Activated CD4-positive, alpha-beta memory T cell treated with anti-CD3 and anti-CD28 coated beads, Interleukin-2, amount 10 ng/mL, durations not matched to agents 7 days and 5 days (primary cell): ENCODE measurements at regions of chr3 and their contacts with region 1.

Region 1: GRCh38 chr3:151067158-151067557 is 18.3 kb upstream of the MED12L start:
- DNase-seq: no peak
- H3K4me3 Mint-ChIP-seq: no peak overlapping the region
- H3K27ac Mint-ChIP-seq: no peak overlapping the region
- H3K4me1 Mint-ChIP-seq: no peaks in the 10 kb centered on the region
- H3K27me3 Mint-ChIP-seq: peaks cover 14% of the 10 kb centered on the region

Region 2: GRCh38 chr3:151051533-151051932 is 15.6 kb before region 1 on chr3:
- CTCF ChIA-PET with region 1: no interaction called
- POLR2A ChIA-PET with region 1: no interaction called
- DNase-seq: no peak
- H3K4me3 Mint-ChIP-seq: no peak overlapping the region
- H3K27ac Mint-ChIP-seq: no peak overlapping the region
- H3K4me1 Mint-ChIP-seq: no peaks in the 10 kb centered on the region
- H3K27me3 Mint-ChIP-seq: peaks cover 28% of the 10 kb centered on the region

Region 3: DNA sequence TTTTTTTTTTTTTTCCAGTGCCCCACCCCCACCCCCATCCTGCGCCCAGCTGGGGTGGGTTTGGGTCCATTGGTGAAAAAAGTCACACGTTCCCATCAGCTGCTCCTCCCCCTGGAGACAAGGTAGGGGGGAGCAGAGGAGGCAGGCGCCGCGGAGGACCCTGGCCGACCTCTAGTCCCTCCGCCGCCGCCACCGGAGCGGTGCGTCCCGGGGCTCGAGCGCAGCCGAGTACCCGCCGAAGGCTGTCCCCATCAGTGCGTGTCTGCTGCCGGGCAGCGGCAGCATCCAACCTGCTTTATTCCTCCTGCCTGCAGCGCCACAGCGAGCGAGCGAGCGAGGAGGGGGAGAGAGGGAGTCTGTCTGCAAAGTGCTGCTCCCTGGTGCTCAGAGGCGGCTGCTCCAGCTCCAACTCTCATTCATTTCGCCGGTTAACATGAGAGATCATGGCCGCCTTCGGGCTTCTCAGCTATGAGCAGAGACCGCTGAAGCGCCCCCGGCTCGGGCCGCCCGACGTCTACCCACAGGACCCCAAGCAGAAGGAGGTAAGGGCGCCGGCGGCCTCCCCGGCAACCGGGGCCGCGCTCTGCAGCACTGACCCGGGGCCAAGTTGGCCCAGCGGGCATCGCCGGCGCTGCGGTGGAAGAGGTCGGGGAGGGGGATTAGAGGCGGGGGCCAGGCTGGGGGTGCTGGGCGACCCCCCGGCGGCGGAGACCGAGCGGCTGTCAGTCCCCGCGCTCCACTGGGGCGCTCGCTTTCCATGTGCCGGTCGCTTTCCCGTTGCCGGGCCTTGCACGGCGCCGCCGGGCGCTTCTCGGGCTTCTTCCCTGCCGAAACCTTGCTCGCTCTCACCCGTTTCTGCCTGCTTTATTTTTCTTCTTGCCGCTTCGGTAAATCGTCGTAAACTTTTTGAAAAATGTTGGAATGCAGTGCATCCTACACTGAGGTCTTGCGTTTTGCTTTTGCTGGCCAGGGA is 19.6 kb after region 1 on chr3:
- CTCF ChIA-PET with region 1: interaction called, 29 read pairs
- POLR2A ChIA-PET with region 1: no interaction called
- DNase-seq: peak; percentile 77
- H3K4me3 Mint-ChIP-seq: peak overlapping the region; percentile 77
- H3K27ac Mint-ChIP-seq: no peak overlapping the region
- H3K4me1 Mint-ChIP-seq: peaks cover 10% of the 10 kb centered on the region
- H3K27me3 Mint-ChIP-seq: peaks cover 48% of the 10 kb centered on the region